Cardiac septum (tissue), 1 donor: ENCODE measurements at regions of chr19 and their contacts with region 1.

Region 1: GRCh38 chr19:13430790-13431582 is 75.3 kb downstream of the CACNA1A start:
- DNase-seq: no peak

Region 2: GRCh38 chr19:13277104-13277809 is 153.7 kb before region 1 on chr19:
- intact Hi-C with region 1: loop called (anchors 5 kb)
- DNase-seq: no peak

Region 3: GRCh38 chr19:13289295-13289694 is 141.7 kb before region 1 on chr19:
- intact Hi-C with region 1: no loop called
- DNase-seq: no peak

Region 4: DNA sequence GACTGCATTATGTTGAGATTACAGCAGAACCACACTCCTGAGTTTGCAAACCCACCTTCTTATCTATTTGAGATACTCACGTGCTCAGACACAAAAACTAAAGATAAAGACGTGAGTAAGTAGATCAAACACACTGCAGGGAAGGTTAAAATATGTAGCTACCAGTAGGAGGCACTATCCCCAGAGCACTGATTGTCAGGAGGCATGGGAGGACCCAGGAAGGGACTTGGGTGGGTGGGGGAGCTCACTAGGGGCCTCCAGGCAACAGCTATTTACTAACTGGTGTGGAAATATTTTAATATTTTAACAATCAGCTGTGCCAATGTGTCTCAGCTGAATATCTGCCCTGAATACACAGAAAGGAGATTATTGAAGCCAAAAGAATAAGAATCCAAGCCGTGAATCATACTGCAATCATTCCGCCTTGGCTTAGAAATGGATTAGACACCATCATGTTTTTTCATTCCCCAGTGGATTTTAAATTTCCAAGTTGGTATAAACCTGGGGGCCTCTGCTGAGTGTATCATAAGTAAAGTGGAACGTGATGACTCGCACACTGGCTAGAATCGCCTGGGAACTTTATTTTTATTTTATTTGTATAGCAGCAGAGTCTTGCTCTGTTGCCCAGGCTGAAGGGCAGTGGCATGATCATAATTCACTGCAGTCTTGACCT is 148.5 kb after region 1 on chr19:
- intact Hi-C with region 1: no loop called
- DNase-seq: no peak